CD4-positive, alpha-beta T cell (primary cell): ENCODE measurements at regions of chr1 and their contacts with region 1.

Region 1: DNA sequence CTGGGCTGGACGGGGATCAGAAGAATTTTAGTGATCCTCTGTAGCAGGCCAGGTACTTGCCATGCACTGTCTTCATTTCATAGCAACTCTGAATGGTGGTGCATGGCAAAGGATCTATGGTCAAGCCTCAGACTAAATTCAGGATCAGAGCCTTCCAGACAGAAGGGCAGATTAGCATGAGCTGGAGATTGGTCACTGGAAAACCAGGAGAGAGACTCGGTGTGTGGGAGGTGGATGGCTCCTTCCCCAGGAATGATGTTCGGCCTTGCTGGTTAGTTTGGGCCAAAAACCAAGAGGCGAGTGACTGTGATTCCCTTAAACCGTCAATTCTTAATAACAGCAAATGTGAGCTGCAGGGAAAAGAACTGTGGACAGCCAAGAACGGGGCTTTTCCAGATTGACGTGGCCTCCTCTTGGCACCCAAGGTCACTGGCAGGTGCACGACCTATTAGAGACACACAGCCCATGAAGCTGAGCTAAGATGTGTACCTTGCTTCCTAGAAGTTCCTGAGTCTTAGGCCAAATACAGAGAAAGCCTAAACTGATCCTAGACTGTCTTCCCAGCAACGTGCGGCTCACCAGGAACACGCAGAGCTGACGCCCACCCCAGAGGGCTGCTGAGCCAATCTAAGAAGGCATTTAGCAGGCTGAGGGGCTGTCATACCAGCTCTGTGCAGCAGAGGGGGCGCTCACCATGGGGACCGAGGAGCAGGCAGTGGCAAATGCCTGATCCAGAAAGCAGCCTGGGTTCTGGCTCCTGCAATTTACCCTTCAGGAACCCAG is 18.5 kb downstream of the ALDH4A1 start:
- DNase-seq: peak; percentile 56 to 82 (median 68)
- ATAC-seq: peak; percentile 86
- H3K4me3 ChIP-seq: no peak overlapping the region
- H3K4me3 Mint-ChIP-seq: no peak overlapping the region
- H3K27ac ChIP-seq: no peak overlapping the region
- H3K27ac Mint-ChIP-seq: no peak overlapping the region
- H3K4me1 ChIP-seq: no peaks in the 10 kb centered on the region
- H3K4me1 Mint-ChIP-seq: no peaks in the 10 kb centered on the region
- H3K27me3 ChIP-seq: no peaks in the 10 kb centered on the region
- H3K27me3 Mint-ChIP-seq: no peaks in the 10 kb centered on the region
- CTCF ChIP-seq: peak; percentile 88

Region 2: GRCh38 chr1:18972531-18972930 is 88.7 kb after region 1 on chr1:
- CTCF ChIA-PET with region 1: interaction called, 22 read pairs
- POLR2A ChIA-PET with region 1: interaction called, 6 read pairs
- intact Hi-C with region 1: loop called (anchors 1 kb)
- DNase-seq: peak in 5 of 14 experiments; percentile 23 to 73 (median 66)
- ATAC-seq: peak; percentile 59
- H3K4me3 ChIP-seq: no peak overlapping the region
- H3K4me3 Mint-ChIP-seq: no peak overlapping the region
- H3K27ac ChIP-seq: no peak overlapping the region
- H3K27ac Mint-ChIP-seq: no peak overlapping the region
- H3K4me1 ChIP-seq: peaks cover 3% of the 10 kb centered on the region
- H3K4me1 Mint-ChIP-seq: no peaks in the 10 kb centered on the region
- H3K27me3 ChIP-seq: no peaks in the 10 kb centered on the region
- H3K27me3 Mint-ChIP-seq: no peaks in the 10 kb centered on the region
- CTCF ChIP-seq: peak; percentile 72

Region 3: GRCh38 chr1:19096036-19096833 is 212.4 kb after region 1 on chr1:
- CTCF ChIA-PET with region 1: no interaction called
- POLR2A ChIA-PET with region 1: no interaction called
- intact Hi-C with region 1: loop called in 1 of 2 experiments (anchors 1 kb)
- DNase-seq: peak in 6 of 14 experiments; percentile 26 to 48 (median 40)
- ATAC-seq: no peak
- H3K4me3 ChIP-seq: no peak overlapping the region
- H3K4me3 Mint-ChIP-seq: no peak overlapping the region
- H3K27ac ChIP-seq: no peak overlapping the region
- H3K27ac Mint-ChIP-seq: no peak overlapping the region
- H3K4me1 ChIP-seq: no peaks in the 10 kb centered on the region
- H3K4me1 Mint-ChIP-seq: peaks cover 4% of the 10 kb centered on the region
- H3K27me3 ChIP-seq: no peaks in the 10 kb centered on the region
- H3K27me3 Mint-ChIP-seq: no peaks in the 10 kb centered on the region
- CTCF ChIP-seq: peak; percentile 38

Region 4: GRCh38 chr1:19113697-19114092 is 229.9 kb after region 1 on chr1:
- CTCF ChIA-PET with region 1: interaction called, 13 read pairs
- POLR2A ChIA-PET with region 1: no interaction called
- intact Hi-C with region 1: loop called in 1 of 2 experiments (anchors 5 kb)
- DNase-seq: peak in 13 of 14 experiments; percentile 10 to 60 (median 21)
- ATAC-seq: peak; percentile 74
- H3K4me3 ChIP-seq: no peak overlapping the region
- H3K4me3 Mint-ChIP-seq: no peak overlapping the region
- H3K27ac ChIP-seq: no peak overlapping the region
- H3K27ac Mint-ChIP-seq: no peak overlapping the region
- H3K4me1 ChIP-seq: no peaks in the 10 kb centered on the region
- H3K4me1 Mint-ChIP-seq: no peaks in the 10 kb centered on the region
- H3K27me3 ChIP-seq: no peaks in the 10 kb centered on the region
- H3K27me3 Mint-ChIP-seq: no peaks in the 10 kb centered on the region
- CTCF ChIP-seq: peak; percentile 36

Region 5: DNA sequence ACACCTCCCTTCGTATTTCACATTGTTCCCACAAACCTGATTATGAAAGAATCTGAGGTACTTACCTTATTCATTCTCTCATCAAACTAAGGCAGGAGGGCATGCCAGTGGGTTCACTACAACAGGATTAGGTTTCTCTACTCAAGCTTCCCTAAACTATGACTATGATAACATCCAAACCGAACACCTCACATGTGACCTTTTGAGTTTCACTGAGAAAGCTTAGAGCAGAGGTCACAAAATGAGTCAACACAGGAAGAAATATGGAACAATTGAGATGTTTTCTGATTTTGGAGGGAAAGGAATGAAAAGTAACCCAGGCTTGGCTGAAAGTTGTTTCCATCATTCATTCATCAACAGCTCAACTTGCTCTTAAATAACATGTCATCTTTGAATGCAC is 302.2 kb after region 1 on chr1:
- CTCF ChIA-PET with region 1: no interaction called
- POLR2A ChIA-PET with region 1: no interaction called
- intact Hi-C with region 1: no loop called
- DNase-seq: no peak
- ATAC-seq: no peak
- H3K4me3 ChIP-seq: no peak overlapping the region
- H3K4me3 Mint-ChIP-seq: no peak overlapping the region
- H3K27ac ChIP-seq: no peak overlapping the region
- H3K27ac Mint-ChIP-seq: no peak overlapping the region
- H3K4me1 ChIP-seq: peaks cover 2% of the 10 kb centered on the region
- H3K4me1 Mint-ChIP-seq: peaks cover 11% of the 10 kb centered on the region
- H3K27me3 ChIP-seq: no peaks in the 10 kb centered on the region
- H3K27me3 Mint-ChIP-seq: no peaks in the 10 kb centered on the region
- CTCF ChIP-seq: no peak

Region 6: GRCh38 chr1:19240673-19241538 is 357.1 kb after region 1 on chr1:
- CTCF ChIA-PET with region 1: no interaction called
- POLR2A ChIA-PET with region 1: no interaction called
- intact Hi-C with region 1: loop called (anchors 1 to 2 kb)
- DNase-seq: peak; percentile 48 to 81 (median 64)
- ATAC-seq: peak; percentile 100
- H3K4me3 ChIP-seq: no peak overlapping the region
- H3K4me3 Mint-ChIP-seq: no peak overlapping the region
- H3K27ac ChIP-seq: no peak overlapping the region
- H3K27ac Mint-ChIP-seq: no peak overlapping the region
- H3K4me1 ChIP-seq: no peaks in the 10 kb centered on the region
- H3K4me1 Mint-ChIP-seq: no peaks in the 10 kb centered on the region
- H3K27me3 ChIP-seq: no peaks in the 10 kb centered on the region
- H3K27me3 Mint-ChIP-seq: no peaks in the 10 kb centered on the region
- CTCF ChIP-seq: peak; percentile 97